ENCODE measurements at regions of chr17 and their contacts with region 1.

Region 1: GRCh38 chr17:74961657-74962490 is 10.7 kb downstream of the HID1 start:
- DNase-seq: peak; percentile 91
- H3K4me3 Mint-ChIP-seq: no peak overlapping the region
- H3K27ac Mint-ChIP-seq: no peak overlapping the region
- H3K4me1 Mint-ChIP-seq: peaks cover 7% of the 10 kb centered on the region
- H3K27me3 Mint-ChIP-seq: no peaks in the 10 kb centered on the region

Region 2: GRCh38 chr17:74786431-74787055 is 175.3 kb before region 1 on chr17:
- CTCF ChIA-PET with region 1: interaction called, 11 read pairs
- intact Hi-C with region 1: loop called (anchors 1 kb)
- DNase-seq: peak; percentile 40
- H3K4me3 Mint-ChIP-seq: no peak overlapping the region
- H3K27ac Mint-ChIP-seq: peak overlapping the region; percentile 54
- H3K4me1 Mint-ChIP-seq: peaks cover 59% of the 10 kb centered on the region
- H3K27me3 Mint-ChIP-seq: no peaks in the 10 kb centered on the region

Region 3: GRCh38 chr17:74807925-74808324 is 153.9 kb before region 1 on chr17:
- CTCF ChIA-PET with region 1: no interaction called
- intact Hi-C with region 1: no loop called
- DNase-seq: no peak
- H3K4me3 Mint-ChIP-seq: no peak overlapping the region
- H3K27ac Mint-ChIP-seq: no peak overlapping the region
- H3K4me1 Mint-ChIP-seq: no peaks in the 10 kb centered on the region
- H3K27me3 Mint-ChIP-seq: no peaks in the 10 kb centered on the region

Region 4: GRCh38 chr17:74851612-74852236 is 110.2 kb before region 1 on chr17:
- CTCF ChIA-PET with region 1: no interaction called
- intact Hi-C with region 1: no loop called
- DNase-seq: no peak
- H3K4me3 Mint-ChIP-seq: no peak overlapping the region
- H3K27ac Mint-ChIP-seq: no peak overlapping the region
- H3K4me1 Mint-ChIP-seq: peaks cover 3% of the 10 kb centered on the region
- H3K27me3 Mint-ChIP-seq: peaks cover 36% of the 10 kb centered on the region

Region 5: DNA sequence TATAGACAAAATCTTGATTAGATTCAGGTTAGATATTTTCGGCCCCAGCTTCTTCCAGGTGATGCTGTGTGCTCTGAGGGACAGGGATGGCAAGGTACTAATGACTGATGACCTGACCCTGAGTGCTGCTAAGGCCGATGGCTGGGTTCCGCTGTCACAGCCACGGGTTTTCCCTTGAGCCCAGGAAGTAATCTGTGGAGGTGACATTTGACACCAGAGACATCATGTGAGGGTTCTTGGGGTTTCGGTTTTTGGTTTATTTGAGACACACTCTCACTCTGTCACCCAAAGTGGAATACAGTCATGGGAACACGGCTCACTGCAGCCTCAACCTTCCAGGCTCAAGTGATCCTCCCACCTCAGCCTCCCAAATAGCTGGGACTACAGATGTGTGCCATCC is 16.3 kb before region 1 on chr17:
- CTCF ChIA-PET with region 1: interaction called, 18 read pairs
- intact Hi-C with region 1: no loop called
- DNase-seq: no peak
- H3K4me3 Mint-ChIP-seq: no peak overlapping the region
- H3K27ac Mint-ChIP-seq: no peak overlapping the region
- H3K4me1 Mint-ChIP-seq: no peaks in the 10 kb centered on the region
- H3K27me3 Mint-ChIP-seq: peaks cover 4% of the 10 kb centered on the region

Region 6: DNA sequence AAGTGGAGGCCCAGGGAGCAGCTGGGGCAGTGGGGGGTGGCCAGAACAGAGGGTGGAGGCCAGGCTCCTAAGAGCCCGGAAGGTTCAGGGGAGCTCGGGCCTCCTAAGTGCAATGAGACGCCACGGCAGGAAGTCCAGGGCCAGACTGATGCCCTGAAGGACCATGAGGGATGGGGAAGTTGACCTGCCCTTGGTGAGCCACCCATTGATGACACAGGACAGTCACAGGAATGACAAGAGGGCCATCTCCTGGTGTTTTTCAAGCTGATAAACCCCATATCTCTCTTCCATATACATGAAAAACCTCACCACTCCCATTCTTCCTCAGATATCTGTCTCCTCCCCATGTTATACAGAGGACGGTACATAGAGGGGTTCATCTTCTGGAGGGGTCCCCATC is 44.8 kb after region 1 on chr17:
- CTCF ChIA-PET with region 1: interaction called, 56 read pairs
- intact Hi-C with region 1: loop called (anchors 1 kb)
- DNase-seq: no peak
- H3K4me3 Mint-ChIP-seq: no peak overlapping the region
- H3K27ac Mint-ChIP-seq: no peak overlapping the region
- H3K4me1 Mint-ChIP-seq: peaks cover 7% of the 10 kb centered on the region
- H3K27me3 Mint-ChIP-seq: no peaks in the 10 kb centered on the region

Region 7: GRCh38 chr17:75046582-75047289 is 84.9 kb after region 1 on chr17 and contains the starts of genes ATP5PD and KCTD2:
- CTCF ChIA-PET with region 1: interaction called, 9 read pairs
- intact Hi-C with region 1: loop called (anchors 5 kb)
- DNase-seq: peak; percentile 97
- H3K4me3 Mint-ChIP-seq: peak within 1 kb of the TSS; percentile 97
- H3K27ac Mint-ChIP-seq: peak within 1 kb of the TSS; percentile 89
- H3K4me1 Mint-ChIP-seq: peaks cover 47% of the 10 kb centered on the region
- H3K27me3 Mint-ChIP-seq: no peaks in the 10 kb centered on the region
- total RNA-seq, gene ATP5PD: 227 to 249 TPM
- total RNA-seq, gene KCTD2: 18.7 to 20.8 TPM

Region 8: GRCh38 chr17:75205037-75205792 is 243.3 kb after region 1 on chr17 and contains the start of gene NUP85:
- CTCF ChIA-PET with region 1: interaction called, 65 read pairs
- intact Hi-C with region 1: loop called (anchors 1 kb)
- DNase-seq: peak; percentile 94
- H3K4me3 Mint-ChIP-seq: peak within 1 kb of the TSS; percentile 98
- H3K27ac Mint-ChIP-seq: peak within 1 kb of the TSS; percentile 98
- H3K4me1 Mint-ChIP-seq: peaks cover 24% of the 10 kb centered on the region
- H3K27me3 Mint-ChIP-seq: no peaks in the 10 kb centered on the region
- total RNA-seq, gene NUP85: 112 to 116 TPM